ENCODE measurements at regions of chr20 and their contacts with region 1.

Region 1: DNA sequence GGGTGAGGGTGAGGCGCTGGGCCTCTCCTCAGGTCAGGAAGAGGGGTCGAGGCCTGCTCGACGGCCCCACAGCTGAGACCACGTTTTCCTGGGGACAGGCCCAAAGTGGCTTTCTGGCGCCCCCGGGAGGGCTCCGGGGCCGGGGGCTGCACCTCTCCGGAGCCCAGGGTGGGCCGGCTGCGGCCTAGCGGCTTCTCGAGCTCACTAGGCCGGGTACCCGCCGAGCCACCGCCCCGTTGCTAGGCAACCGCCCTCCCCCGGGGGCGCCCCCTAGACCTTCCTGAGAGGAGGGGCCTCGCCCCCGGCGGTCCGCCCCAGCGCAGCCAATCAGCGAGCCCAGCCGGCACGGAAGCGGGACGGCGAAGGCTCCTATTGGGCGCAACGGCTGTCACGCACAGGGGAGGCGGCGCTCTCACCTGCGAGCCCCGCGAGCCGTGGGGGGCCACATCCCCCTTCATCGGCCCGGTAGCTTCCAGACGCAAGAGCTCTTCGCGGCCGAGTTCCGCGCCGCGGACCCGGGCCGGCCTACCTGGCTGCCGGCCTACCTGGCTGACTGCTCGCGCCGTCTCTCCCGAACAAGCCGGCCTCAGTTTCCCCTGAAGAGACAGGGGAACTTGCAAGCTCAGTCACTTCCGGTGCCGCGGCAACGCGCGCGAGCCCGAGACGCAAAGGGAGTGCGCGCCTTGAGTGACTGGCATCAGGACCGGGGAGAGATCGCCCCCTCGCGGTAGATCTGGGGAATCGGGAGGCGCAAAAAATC is 831 bp upstream of the BCL2L1 start:
- DNase-seq: peak; percentile 98 to 100 (median 99)
- ATAC-seq: peak; percentile 91 to 97 (median 96)
- H3K4me3 ChIP-seq: peak overlapping the region; percentile 52 to 93 (median 82)
- H3K27ac ChIP-seq: peak overlapping the region; percentile 93 to 100 (median 99)
- H3K4me1 ChIP-seq: peaks cover 4 to 44% (median 20%) of the 10 kb centered on the region in 12 donors
- H3K27me3 ChIP-seq: no peaks in the 10 kb centered on the region
- CTCF ChIP-seq: peak; percentile 91 to 97 (median 93)
- POLR2A ChIP-seq: peak; percentile 86 to 87

Region 2: GRCh38 chr20:31560094-31560899 is 163.2 kb before region 1 on chr20:
- intact Hi-C with region 1: loop called in 3 of 10 experiments (anchors 5 to 10 kb)
- DNase-seq: peak; percentile 54 to 85 (median 60)
- ATAC-seq: peak; percentile 5 to 31 (median 11)
- H3K4me3 ChIP-seq: no peak overlapping the region
- H3K27ac ChIP-seq: peak overlapping the region in 4 of 12 donors; percentile 9 to 37 (median 20)
- H3K4me1 ChIP-seq: peaks cover 0 to 19% (median 5%) of the 10 kb centered on the region in 12 donors
- H3K27me3 ChIP-seq: no peaks in the 10 kb centered on the region
- CTCF ChIP-seq: peak; percentile 63 to 91 (median 83)
- POLR2A ChIP-seq: no peak

Region 3: DNA sequence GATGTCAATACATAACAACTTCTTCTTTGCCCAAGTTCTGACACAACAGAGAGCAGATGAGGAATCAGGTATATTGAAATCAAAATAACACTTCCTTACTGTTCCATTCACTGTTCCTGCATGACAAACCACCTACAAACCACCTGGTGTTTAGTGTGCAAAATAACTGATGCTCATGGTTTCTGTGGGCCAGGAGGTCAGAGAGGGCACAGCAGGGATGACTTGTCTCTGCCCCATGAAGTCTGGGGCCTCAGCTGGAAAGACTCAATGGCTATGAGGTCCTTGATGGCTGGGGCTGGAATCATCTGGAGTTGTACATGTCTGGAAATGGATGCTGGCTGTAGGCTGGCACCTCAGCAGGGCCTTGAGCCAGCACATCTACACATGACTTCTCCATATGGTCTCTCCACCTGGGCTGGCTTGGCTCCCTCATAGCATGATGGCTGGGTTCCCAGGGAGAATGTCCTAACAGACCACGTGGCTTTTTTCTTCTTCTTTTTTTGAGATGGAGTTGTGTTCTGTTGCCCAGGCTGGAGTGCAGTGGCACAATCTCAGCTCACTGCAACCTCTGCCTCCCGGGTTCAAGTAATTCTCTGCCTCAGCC is 93.2 kb before region 1 on chr20:
- intact Hi-C with region 1: loop called in 1 of 10 experiments (anchors 1 kb)
- DNase-seq: no peak
- ATAC-seq: no peak
- H3K4me3 ChIP-seq: no peak overlapping the region
- H3K27ac ChIP-seq: no peak overlapping the region
- H3K4me1 ChIP-seq: peaks cover 0 to 8% (median 0%) of the 10 kb centered on the region in 12 donors
- H3K27me3 ChIP-seq: no peaks in the 10 kb centered on the region
- CTCF ChIP-seq: no peak
- POLR2A ChIP-seq: no peak

Region 4: DNA sequence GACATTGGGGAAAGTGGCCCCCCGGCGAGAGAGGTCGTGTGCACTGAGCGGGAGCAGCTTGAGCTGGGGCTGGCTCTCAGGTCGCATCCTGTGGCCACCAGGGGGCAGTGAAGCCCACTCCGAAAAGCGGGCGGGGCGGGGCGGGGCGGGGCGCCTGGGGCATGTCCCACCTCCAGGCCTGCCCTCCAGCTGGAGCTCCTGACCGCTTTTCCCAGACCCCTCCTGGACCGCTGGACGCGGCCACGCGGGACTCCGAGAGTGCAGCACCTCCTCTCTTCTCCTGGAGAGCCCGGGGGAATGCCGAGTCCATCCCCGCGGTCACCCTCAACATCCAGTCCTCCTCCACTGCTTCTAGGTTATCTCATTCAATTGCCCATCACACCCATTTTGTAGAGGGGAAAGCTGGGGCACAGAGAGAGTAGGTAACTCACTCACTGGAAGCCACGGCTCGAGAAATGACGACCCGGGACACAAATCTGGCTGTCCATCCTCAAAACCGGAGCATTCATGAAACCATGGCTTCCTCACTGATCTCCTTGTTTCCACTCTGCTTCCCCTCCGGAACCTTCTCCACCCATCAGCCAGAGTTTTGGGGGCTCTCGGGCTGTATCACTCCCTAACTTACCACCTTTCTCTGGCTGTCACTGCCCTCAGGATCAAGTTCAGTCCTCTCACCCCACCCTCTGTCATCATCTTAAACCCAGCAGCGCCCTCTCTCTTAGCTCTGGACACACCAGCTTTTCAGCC is 61.7 kb before region 1 on chr20:
- intact Hi-C with region 1: loop called (anchors 1 to 2 kb)
- DNase-seq: peak; percentile 86 to 90 (median 87)
- ATAC-seq: peak; percentile 57 to 89 (median 85)
- H3K4me3 ChIP-seq: peak overlapping the region in 11 of 12 donors; percentile 2 to 60 (median 42)
- H3K27ac ChIP-seq: peak overlapping the region; percentile 43 to 84 (median 78)
- H3K4me1 ChIP-seq: peaks cover 18 to 53% (median 44%) of the 10 kb centered on the region in 12 donors
- H3K27me3 ChIP-seq: no peaks in the 10 kb centered on the region
- CTCF ChIP-seq: peak; percentile 74 to 93 (median 86)
- POLR2A ChIP-seq: peak in 1 of 2 donors; percentile 78

Region 5: DNA sequence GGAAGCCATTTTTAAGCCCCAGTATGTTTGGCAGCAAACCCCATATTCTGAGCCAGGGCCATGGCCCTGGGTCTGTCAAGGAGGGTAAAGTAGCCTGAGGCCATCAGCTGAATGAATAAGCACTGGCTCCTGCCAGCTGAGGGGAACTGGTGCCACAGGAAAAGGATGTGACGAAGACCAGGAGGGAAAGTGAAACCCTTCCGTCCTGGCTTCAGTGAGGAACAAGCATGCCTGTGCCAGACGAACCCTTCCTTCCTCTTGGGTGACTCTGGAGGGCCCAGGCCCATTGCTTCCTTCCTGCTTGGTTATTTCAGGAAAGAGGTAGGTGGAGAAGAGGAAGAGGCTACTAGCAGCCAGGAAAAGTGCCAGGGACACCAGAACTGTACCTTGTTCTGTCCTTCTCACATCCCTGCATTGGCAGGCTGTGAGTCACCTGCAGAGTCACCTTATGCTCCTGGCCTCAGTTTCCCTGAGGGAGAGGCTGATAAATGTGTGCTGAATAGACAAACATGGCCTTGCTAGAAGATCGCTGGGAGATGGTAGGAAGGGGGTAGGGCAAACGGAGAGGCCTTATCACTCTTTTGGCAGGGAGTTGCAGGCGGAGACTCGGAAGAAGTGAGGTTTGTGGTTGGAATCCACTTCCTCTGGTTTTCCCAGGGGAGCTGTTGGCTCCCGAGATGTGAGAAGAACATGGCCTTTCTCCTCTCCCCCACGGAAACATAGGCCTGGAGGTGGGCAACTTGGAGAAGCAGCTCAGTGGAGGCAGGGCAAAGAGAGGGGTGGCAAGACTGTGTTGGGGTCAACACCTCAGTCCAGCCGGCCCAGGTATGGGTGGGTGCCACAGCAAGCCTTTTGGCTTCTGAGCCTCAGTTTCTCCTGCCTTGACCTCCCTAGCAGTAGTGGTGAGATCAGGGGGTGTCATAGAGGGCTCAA is 48.3 kb before region 1 on chr20:
- intact Hi-C with region 1: loop called in 1 of 10 experiments (anchors 2 kb)
- DNase-seq: peak; percentile 75 to 83 (median 79)
- ATAC-seq: peak; percentile 25 to 77 (median 70)
- H3K4me3 ChIP-seq: peak overlapping the region in 8 of 12 donors; percentile 1 to 52 (median 12)
- H3K27ac ChIP-seq: peak overlapping the region; percentile 10 to 96 (median 88)
- H3K4me1 ChIP-seq: peaks cover 48 to 100% (median 98%) of the 10 kb centered on the region in 12 donors
- H3K27me3 ChIP-seq: no peaks in the 10 kb centered on the region
- CTCF ChIP-seq: no peak
- POLR2A ChIP-seq: no peak

Region 6: DNA sequence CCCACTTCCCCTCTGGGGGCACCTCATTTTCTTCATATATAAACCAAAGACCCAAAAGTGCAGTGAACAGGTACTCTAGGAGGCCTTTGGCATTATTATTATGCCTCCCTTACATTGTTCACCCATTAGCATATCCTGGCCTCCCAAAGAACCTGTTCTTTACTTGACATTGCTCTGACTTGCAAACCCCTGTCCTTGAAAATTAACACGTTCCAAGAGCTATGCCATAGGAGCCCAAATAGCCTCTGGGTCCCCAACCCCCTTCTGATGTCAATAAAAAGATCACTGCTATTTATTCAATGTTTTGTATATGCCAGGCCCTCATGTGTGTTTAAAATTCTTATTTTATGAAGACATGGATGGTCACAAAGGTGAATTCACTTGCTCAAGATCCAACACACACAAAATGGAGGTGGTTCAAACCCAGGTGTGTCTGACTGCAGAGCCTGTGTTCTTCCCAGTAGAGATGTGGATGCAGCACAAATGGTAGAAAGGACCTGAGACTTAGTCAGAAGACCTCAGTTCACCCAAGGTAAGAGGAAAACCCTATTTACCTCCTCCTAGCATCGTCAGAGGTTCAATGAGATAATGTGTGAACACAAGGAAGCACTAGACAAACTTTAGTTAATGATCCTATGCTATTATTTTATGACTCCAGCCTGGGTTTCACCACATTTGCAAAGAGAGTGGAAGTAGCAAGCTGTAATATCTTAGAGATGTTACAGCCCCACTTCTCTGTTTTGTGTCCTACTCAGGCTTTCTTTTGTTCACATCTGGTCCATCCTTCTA is 37.5 kb before region 1 on chr20:
- intact Hi-C with region 1: no loop called
- DNase-seq: no peak
- ATAC-seq: no peak
- H3K4me3 ChIP-seq: no peak overlapping the region
- H3K27ac ChIP-seq: peak overlapping the region in 8 of 12 donors; percentile 4 to 58 (median 32)
- H3K4me1 ChIP-seq: peaks cover 5 to 77% (median 47%) of the 10 kb centered on the region in 12 donors
- H3K27me3 ChIP-seq: no peaks in the 10 kb centered on the region
- CTCF ChIP-seq: no peak
- POLR2A ChIP-seq: no peak